Naive thymus-derived CD4-positive, alpha-beta T cell (primary cell): ENCODE measurements at regions of chr1 and their contacts with region 1.

Region 1: DNA sequence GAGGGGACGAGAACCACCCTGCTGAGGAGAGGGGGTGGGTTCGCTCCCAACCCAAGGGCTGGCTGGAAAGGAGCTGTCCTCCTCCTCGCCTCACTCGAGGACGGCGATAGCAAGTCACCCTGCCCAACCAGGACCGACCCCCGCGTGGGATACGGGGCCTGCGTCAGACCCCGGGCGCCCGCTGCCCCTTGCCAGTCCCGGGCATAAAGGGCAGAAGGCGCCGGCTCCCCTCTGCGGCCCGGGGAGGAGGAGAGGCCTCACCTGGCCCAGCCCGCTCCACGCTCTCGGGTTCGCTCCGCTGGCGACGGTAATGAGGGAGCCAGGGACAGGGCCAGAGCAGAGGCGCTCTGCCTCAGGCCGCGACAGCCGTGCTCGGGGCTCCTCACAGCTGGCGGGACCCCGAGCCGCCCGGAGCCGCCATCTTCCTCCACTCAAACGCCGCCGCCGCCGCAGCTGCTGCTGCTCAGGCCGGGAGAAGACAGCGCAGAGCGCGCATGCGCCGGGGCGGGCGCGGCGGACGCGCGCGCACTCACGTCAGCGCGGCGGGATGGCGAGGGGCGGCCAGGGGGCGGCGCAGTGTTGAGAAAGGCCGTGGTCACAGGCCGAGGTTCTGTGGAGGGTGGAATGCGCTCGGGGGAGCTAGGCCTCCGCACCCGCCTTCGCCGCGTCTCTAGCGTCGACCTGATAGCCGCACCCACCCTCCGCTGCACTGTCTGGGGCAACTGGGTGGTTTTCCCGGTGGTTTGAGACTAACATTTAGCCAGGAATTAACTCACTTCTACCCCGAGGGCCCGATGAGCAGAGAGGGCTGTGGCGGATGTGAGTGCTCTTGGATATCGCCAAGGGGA is at the start of gene FBXO42:
- DNase-seq: peak; percentile 88 to 96 (median 94)
- ATAC-seq: peak; percentile 95
- H3K4me3 ChIP-seq: peak within 1 kb of the TSS; percentile 71
- H3K4me3 Mint-ChIP-seq: peak within 1 kb of the TSS; percentile 84 to 98 (median 94)
- H3K27ac ChIP-seq: peak within 1 kb of the TSS; percentile 97
- H3K27ac Mint-ChIP-seq: peak within 1 kb of the TSS; percentile 69 to 98 (median 94)
- H3K4me1 ChIP-seq: peaks cover 10 to 24% of the 10 kb centered on the region in 2 donors
- H3K4me1 Mint-ChIP-seq: peaks cover 17 to 44% (median 34%) of the 10 kb centered on the region in 7 donors
- H3K27me3 ChIP-seq: no peaks in the 10 kb centered on the region
- H3K27me3 Mint-ChIP-seq: no peaks in the 10 kb centered on the region
- total RNA-seq, gene FBXO42: 18.7 to 25.7 (median 24.6) TPM

Region 2: DNA sequence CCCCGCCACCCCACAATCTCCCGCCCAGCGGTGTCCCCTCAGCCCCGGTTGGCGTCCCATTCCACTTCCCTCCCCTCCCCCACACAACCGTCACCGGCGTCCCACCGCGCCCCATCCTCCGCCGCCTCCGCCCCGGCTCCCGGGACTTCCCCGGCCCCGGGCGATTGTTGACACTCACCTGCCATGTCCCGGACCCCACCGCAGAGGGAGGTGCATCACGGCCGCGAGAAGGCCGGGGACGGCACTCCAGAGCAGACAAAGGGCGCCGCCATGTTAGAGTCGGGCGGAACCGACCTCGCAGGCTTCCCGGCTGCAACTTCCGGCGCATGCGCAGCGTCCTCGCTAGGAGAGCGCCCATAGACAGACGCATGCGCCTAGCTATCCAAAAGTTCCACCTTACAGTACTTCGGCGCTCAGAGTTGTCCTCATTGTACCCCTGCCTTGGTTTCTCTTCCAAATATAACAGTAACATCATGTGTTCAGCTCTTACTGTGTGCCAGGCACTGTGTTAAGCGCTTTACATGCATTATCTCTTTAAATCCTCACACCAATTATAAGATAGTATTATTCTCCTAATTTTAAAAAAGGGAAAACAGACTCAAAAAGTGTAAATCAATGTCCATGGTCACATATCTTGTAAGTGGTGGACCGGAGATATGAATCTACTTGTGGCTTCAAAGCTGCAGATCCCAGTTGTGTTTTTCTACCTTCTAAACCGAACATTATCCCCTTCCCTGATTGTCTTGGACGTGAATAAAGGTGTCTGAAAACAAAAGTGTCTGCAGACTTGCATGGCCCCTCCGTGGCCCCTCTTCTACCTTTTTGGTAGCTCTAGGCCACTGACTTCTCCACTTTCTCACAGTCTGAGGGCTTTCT is 376.2 kb before region 1 on chr1 and contains the start of gene ZBTB17:
- CTCF ChIA-PET with region 1: no interaction called
- POLR2A ChIA-PET with region 1: interaction called, 5 read pairs
- intact Hi-C with region 1: loop called (anchors 5 kb)
- DNase-seq: peak; percentile 90 to 95 (median 94)
- ATAC-seq: peak; percentile 96
- H3K4me3 ChIP-seq: peak within 1 kb of the TSS; percentile 76
- H3K4me3 Mint-ChIP-seq: peak within 1 kb of the TSS; percentile 82 to 94 (median 90)
- H3K27ac ChIP-seq: peak within 1 kb of the TSS; percentile 83
- H3K27ac Mint-ChIP-seq: peak within 1 kb of the TSS; percentile 82 to 95 (median 92)
- H3K4me1 ChIP-seq: peaks cover 12 to 17% of the 10 kb centered on the region in 2 donors
- H3K4me1 Mint-ChIP-seq: peaks cover 21 to 46% (median 38%) of the 10 kb centered on the region in 7 donors
- H3K27me3 ChIP-seq: no peaks in the 10 kb centered on the region
- H3K27me3 Mint-ChIP-seq: no peaks in the 10 kb centered on the region
- total RNA-seq, gene ZBTB17: 47.3 to 85.1 (median 65.0) TPM

Region 3: DNA sequence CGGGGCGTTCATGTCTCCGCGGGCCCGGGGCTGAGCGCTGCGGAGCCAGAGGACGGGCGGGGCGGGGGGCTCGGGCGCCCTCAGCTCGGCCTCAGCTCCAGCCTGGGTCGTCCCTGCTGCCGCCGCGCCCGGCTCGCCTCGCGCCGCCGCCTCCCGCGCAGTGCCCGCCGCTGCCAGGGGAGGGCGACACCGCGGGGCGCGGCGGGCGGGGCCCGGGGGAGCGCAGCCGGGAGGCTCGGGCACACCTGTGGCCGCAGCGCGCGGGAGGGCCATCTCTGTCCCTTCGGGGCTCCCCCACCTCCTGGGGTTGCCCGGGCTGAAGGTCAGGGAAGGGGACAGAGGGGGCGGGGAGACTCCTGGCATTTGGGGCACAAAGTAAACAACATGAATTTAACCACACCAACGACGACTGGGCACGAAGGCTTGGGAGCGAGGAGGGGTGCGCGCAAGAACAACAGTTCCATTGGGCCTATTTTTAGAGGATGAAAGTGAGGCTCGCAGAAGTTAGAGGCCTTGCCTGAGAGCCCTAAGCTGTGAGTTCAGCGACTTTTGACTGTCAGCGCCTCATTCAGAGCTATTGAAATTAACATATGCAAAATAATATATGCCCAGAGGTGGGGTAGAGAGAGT is 278.6 kb before region 1 on chr1 and contains the start of gene FAM131C:
- CTCF ChIA-PET with region 1: interaction called, 7 read pairs
- POLR2A ChIA-PET with region 1: no interaction called
- intact Hi-C with region 1: loop called in 1 of 2 experiments (anchors 5 kb)
- DNase-seq: peak in 7 of 9 donors; percentile 18 to 71 (median 36)
- ATAC-seq: peak; percentile 91
- H3K4me3 ChIP-seq: peak within 1 kb of the TSS; percentile 41
- H3K4me3 Mint-ChIP-seq: peak within 1 kb of the TSS; percentile 67 to 85 (median 81)
- H3K27ac ChIP-seq: no peak within 1 kb of the TSS
- H3K27ac Mint-ChIP-seq: peak within 1 kb of the TSS in 2 of 9 donors; percentile 52 to 76
- H3K4me1 ChIP-seq: peaks cover 5 to 13% of the 10 kb centered on the region in 2 donors
- H3K4me1 Mint-ChIP-seq: peaks cover 13 to 27% (median 15%) of the 10 kb centered on the region in 7 donors
- H3K27me3 ChIP-seq: peaks cover 0 to 6% of the 10 kb centered on the region in 2 donors
- H3K27me3 Mint-ChIP-seq: peaks cover 5 to 40% (median 10%) of the 10 kb centered on the region in 5 donors
- total RNA-seq, gene FAM131C: 1.3 TPM in 1 of 5 experiments, not detected in the others

Region 4: GRCh38 chr1:16101623-16102022 is 250.6 kb before region 1 on chr1:
- CTCF ChIA-PET with region 1: no interaction called
- POLR2A ChIA-PET with region 1: no interaction called
- intact Hi-C with region 1: no loop called
- DNase-seq: no peak
- ATAC-seq: no peak
- H3K4me3 ChIP-seq: no peak overlapping the region
- H3K4me3 Mint-ChIP-seq: no peak overlapping the region
- H3K27ac ChIP-seq: no peak overlapping the region
- H3K27ac Mint-ChIP-seq: peak overlapping the region in 1 of 9 donors; percentile 38
- H3K4me1 ChIP-seq: no peaks in the 10 kb centered on the region
- H3K4me1 Mint-ChIP-seq: peaks cover 0 to under 1% (median 0%) of the 10 kb centered on the region in 7 donors
- H3K27me3 ChIP-seq: no peaks in the 10 kb centered on the region
- H3K27me3 Mint-ChIP-seq: peaks cover 0 to 38% (median under 1%) of the 10 kb centered on the region in 5 donors

Region 5: GRCh38 chr1:16236511-16237342 is 115.5 kb before region 1 on chr1 and contains the start of gene CPLANE2:
- CTCF ChIA-PET with region 1: no interaction called
- POLR2A ChIA-PET with region 1: interaction called, 3 read pairs
- intact Hi-C with region 1: loop called in 1 of 2 experiments (anchors 5 kb)
- DNase-seq: peak; percentile 91 to 99 (median 94)
- ATAC-seq: peak; percentile 89
- H3K4me3 ChIP-seq: peak within 1 kb of the TSS; percentile 94
- H3K4me3 Mint-ChIP-seq: peak within 1 kb of the TSS; percentile 85 to 95 (median 92)
- H3K27ac ChIP-seq: peak within 1 kb of the TSS; percentile 78
- H3K27ac Mint-ChIP-seq: peak within 1 kb of the TSS; percentile 91 to 97 (median 95)
- H3K4me1 ChIP-seq: peaks cover 15 to 19% of the 10 kb centered on the region in 2 donors
- H3K4me1 Mint-ChIP-seq: peaks cover 0 to 28% (median 23%) of the 10 kb centered on the region in 7 donors
- H3K27me3 ChIP-seq: no peaks in the 10 kb centered on the region
- H3K27me3 Mint-ChIP-seq: no peaks in the 10 kb centered on the region
- total RNA-seq, gene CPLANE2: 6.6 to 11.4 (median 8.8) TPM

Region 6: GRCh38 chr1:16334655-16335340 is 17.4 kb before region 1 on chr1:
- CTCF ChIA-PET with region 1: no interaction called
- POLR2A ChIA-PET with region 1: no interaction called
- intact Hi-C with region 1: no loop called
- DNase-seq: no peak
- ATAC-seq: no peak
- H3K4me3 ChIP-seq: no peak overlapping the region
- H3K4me3 Mint-ChIP-seq: no peak overlapping the region
- H3K27ac ChIP-seq: no peak overlapping the region
- H3K27ac Mint-ChIP-seq: no peak overlapping the region
- H3K4me1 ChIP-seq: peaks cover 0 to 3% of the 10 kb centered on the region in 2 donors
- H3K4me1 Mint-ChIP-seq: peaks cover 23 to 53% (median 47%) of the 10 kb centered on the region in 7 donors
- H3K27me3 ChIP-seq: no peaks in the 10 kb centered on the region
- H3K27me3 Mint-ChIP-seq: no peaks in the 10 kb centered on the region